Adrenal gland (tissue), 19 donors: ENCODE measurements at regions of chr1 and their contacts with region 1.

Region 1: DNA sequence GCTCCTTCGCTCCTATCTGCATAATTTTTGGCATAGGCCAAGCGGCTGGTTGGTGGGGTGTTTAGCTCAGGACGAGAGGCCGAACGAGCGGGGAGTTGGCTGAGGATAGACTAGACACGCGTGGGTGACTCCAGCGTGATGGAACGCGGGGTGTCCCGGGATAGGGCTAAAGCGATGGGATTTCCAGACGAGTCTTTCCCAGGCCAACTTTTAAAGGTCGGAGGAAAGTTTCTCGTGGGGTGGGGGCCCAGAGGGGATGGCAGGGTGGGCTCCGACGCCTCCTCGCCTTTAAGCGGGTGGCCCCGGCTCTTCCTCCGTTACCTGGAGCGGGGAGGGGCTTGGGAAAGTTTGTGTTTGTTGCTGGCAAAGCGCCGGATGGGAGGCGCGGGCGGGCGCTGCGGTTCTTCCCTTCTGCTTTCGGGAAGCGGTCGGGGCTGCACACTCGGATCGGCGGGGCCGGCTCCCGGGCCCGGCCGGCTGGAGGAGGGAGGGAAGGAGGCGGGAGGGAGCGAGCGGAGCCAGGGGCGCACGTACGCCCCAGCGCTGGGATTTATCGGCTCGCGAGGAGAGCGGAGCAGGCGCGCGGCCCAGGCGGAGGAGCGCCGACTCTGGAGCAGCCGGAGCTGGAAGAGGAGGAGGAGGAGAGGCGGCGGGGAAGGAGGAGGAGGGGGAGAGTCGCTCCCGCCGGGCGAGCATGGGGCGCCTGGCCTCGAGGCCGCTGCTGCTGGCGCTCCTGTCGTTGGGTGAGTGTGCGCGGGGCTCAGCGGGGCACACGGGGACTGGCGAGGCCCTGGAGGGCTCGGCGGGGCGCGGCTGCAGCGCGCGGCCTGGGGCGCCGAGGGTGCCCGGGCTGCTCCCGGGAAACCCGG is at the start of gene PTGFRN:
- DNase-seq: peak; percentile 61 to 79 (median 75)
- H3K4me3 ChIP-seq: peak within 1 kb of the TSS; percentile 11 to 75 (median 40)
- H3K27ac ChIP-seq: peak within 1 kb of the TSS; percentile 26 to 90 (median 84)
- H3K4me1 ChIP-seq: peaks cover 19 to 46% of the 10 kb centered on the region in 2 donors
- H3K27me3 ChIP-seq: no peaks in the 10 kb centered on the region
- CTCF ChIP-seq: peak in 1 of 6 experiments; percentile 0
- POLR2A ChIP-seq: peak; percentile 42 to 78
- total RNA-seq, gene PTGFRN: 63.8 to 173 (median 72.1) TPM

Region 2: GRCh38 chr1:116987256-116987555 is 77.5 kb after region 1 on chr1:
- intact Hi-C with region 1: loop called in 1 of 2 experiments (anchors 10 kb)
- DNase-seq: no peak
- H3K4me3 ChIP-seq: no peak overlapping the region
- H3K27ac ChIP-seq: no peak overlapping the region
- H3K4me1 ChIP-seq: peaks cover 32 to 56% of the 10 kb centered on the region in 2 donors
- H3K27me3 ChIP-seq: no peaks in the 10 kb centered on the region
- CTCF ChIP-seq: no peak
- POLR2A ChIP-seq: no peak